ENCODE measurements at regions of chr10 and their contacts with region 1.

Region 1: GRCh38 chr10:73940634-73941221 is 29.8 kb downstream of the PLAU start:
- DNase-seq: peak; percentile 89 to 96 (median 90)
- ATAC-seq: peak; percentile 90 to 96 (median 94)
- H3K4me3 ChIP-seq: peak overlapping the region in 7 of 12 donors; percentile 3 to 31 (median 18)
- H3K27ac ChIP-seq: peak overlapping the region in 11 of 12 donors; percentile 38 to 84 (median 72)
- H3K4me1 ChIP-seq: peaks cover 0 to 50% (median 30%) of the 10 kb centered on the region in 12 donors
- H3K27me3 ChIP-seq: no peaks in the 10 kb centered on the region
- CTCF ChIP-seq: peak; percentile 88 to 99 (median 94)
- POLR2A ChIP-seq: peak in 1 of 2 donors; percentile 29

Region 2: GRCh38 chr10:73848821-73849489 is 91.8 kb before region 1 on chr10:
- intact Hi-C with region 1: loop called in 2 of 10 experiments (anchors 2 kb)
- DNase-seq: peak; percentile 81 to 91 (median 84)
- ATAC-seq: peak; percentile 80 to 93 (median 92)
- H3K4me3 ChIP-seq: peak overlapping the region in 6 of 12 donors; percentile 8 to 29 (median 16)
- H3K27ac ChIP-seq: peak overlapping the region; percentile 7 to 88 (median 61)
- H3K4me1 ChIP-seq: peaks cover 0 to 29% (median 14%) of the 10 kb centered on the region in 12 donors
- H3K27me3 ChIP-seq: no peaks in the 10 kb centered on the region
- CTCF ChIP-seq: peak; percentile 99 to 100 (median 100)
- POLR2A ChIP-seq: no peak

Region 3: DNA sequence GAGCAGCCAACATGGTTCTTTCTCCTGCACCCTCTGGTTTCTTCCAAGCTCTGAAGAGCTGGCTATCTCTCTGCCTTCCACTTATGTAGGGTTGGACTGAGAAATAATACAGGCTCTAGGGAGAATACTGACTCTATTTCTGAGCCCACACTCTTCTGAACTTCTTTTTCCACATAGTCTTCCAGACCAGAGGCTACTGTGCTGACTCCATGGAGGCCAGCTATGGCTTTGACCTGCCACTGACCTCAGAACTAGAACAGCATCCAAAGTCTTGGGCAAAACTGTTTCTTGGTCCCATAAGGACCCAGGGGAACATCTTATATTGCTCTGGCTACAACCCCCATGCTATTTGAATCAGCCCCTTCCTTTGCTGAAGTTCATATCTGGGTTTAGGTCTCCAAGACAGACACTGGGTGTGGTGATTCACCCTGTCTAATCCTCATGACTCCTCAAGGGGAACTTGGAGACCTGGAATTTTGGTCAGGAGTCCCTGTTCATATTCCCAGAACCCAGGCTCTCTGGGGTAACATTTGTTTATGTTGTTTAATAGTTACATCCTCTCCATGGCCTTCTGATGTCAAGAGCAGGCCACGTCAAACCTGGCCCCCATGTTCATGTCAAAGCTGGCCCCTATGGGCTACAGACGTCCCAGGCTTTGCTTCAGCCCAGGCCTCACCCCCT is 41.9 kb before region 1 on chr10:
- intact Hi-C with region 1: no loop called
- DNase-seq: no peak
- ATAC-seq: peak in 2 of 4 donors; percentile 41 to 56
- H3K4me3 ChIP-seq: no peak overlapping the region
- H3K27ac ChIP-seq: peak overlapping the region in 4 of 12 donors; percentile 16 to 74 (median 44)
- H3K4me1 ChIP-seq: peaks cover 0 to 54% (median 0%) of the 10 kb centered on the region in 12 donors
- H3K27me3 ChIP-seq: no peaks in the 10 kb centered on the region
- CTCF ChIP-seq: no peak
- POLR2A ChIP-seq: no peak

Region 4: GRCh38 chr10:73908853-73909538 is 31.7 kb before region 1 on chr10:
- intact Hi-C with region 1: loop called in 3 of 10 experiments (anchors 2 kb)
- DNase-seq: peak in 4 of 5 donors; percentile 56 to 70 (median 65)
- ATAC-seq: peak in 3 of 4 donors; percentile 32 to 66 (median 45)
- H3K4me3 ChIP-seq: peak overlapping the region in 3 of 12 donors; percentile 11 to 18 (median 13)
- H3K27ac ChIP-seq: peak overlapping the region in 11 of 12 donors; percentile 19 to 96 (median 72)
- H3K4me1 ChIP-seq: peaks cover 0 to 82% (median 53%) of the 10 kb centered on the region in 12 donors
- H3K27me3 ChIP-seq: no peaks in the 10 kb centered on the region
- CTCF ChIP-seq: no peak
- POLR2A ChIP-seq: no peak